ENCODE measurements at regions of chr5 and their contacts with region 1.

Region 1: DNA sequence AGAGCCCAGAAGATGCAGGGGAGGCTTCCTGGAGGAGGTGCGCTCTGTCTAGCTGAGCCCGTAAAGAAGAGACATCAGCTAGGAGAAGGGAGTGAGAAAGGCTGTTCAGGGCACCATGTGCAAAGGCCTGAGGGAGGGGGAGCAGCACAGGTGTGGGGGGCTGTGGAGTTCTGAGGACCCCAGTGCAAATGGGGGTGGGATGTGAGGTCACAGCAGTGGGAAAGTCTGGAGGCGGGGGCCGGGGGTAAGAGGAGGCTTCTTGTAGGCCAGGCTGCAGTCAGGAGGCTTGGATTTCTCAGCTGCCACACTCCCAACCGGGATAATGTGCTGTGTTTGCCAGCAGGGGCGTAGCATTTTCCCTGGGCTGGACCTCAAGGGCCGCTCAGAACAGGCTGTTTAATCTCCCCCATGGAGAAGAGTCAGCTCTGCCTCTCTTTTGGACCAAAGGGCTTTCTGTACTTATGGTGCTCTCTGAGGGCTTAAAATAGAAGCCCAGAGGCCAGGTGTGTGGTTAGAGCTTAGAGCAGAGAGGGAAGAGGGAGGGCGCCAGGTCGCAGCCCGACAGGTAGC is 5.7 kb downstream of the NEURL1B start:
- DNase-seq: peak; percentile 62
- ATAC-seq: peak; percentile 85
- H3K4me3 Mint-ChIP-seq: no peak overlapping the region; the same call in 1 of the 2 replicates
- H3K27ac Mint-ChIP-seq: peak overlapping the region; percentile 55; the same call in 1 of the 2 replicates
- H3K4me1 Mint-ChIP-seq: peaks cover 51% of the 10 kb centered on the region
- H3K27me3 Mint-ChIP-seq: peaks cover 17% of the 10 kb centered on the region
- CTCF ChIP-seq: peak; percentile 24; the same call in 1 of the 2 replicates

Region 2: GRCh38 chr5:172533399-172534228 is 113.2 kb before region 1 on chr5:
- CTCF ChIA-PET with region 1: no interaction called
- POLR2A ChIA-PET with region 1: no interaction called
- DNase-seq: no peak
- ATAC-seq: no peak
- H3K4me3 Mint-ChIP-seq: no peak overlapping the region
- H3K27ac Mint-ChIP-seq: no peak overlapping the region
- H3K4me1 Mint-ChIP-seq: no peaks in the 10 kb centered on the region
- H3K27me3 Mint-ChIP-seq: peaks cover 10% of the 10 kb centered on the region
- CTCF ChIP-seq: no peak

Region 3: GRCh38 chr5:172586125-172587060 is 60.4 kb before region 1 on chr5:
- CTCF ChIA-PET with region 1: interaction called, 12 read pairs
- POLR2A ChIA-PET with region 1: no interaction called
- DNase-seq: peak; percentile 67
- ATAC-seq: peak; percentile 89
- H3K4me3 Mint-ChIP-seq: peak overlapping the region; percentile 48
- H3K27ac Mint-ChIP-seq: peak overlapping the region; percentile 67
- H3K4me1 Mint-ChIP-seq: peaks cover 48% of the 10 kb centered on the region
- H3K27me3 Mint-ChIP-seq: peaks cover 36% of the 10 kb centered on the region
- CTCF ChIP-seq: no peak